Cardiac septum (tissue), 1 donor: ENCODE measurements at regions of chr19 and their contacts with region 1.

Region 1: GRCh38 chr19:14023404-14024235 is 4.3 kb upstream of the RLN3 start:
- DNase-seq: no peak

Region 2: DNA sequence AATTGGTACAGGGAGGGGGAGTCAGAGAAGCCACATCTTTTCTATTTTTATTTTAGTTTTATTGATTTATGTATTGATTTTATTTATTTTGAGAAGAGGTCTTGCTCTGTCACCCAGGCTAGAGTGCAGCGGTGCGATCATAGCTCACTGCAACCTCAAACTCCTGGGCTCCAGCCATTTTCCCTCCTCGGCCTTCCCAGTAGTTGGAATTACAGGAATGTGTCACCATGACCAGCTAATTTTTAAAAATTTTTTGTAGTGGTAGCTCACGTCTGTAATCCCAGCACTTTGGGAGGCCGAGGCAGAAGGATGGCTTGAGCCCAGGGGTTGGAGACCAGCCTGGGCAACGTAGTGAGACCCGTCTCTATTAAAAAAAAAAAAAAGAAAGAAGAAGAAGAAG is 12.1 kb after region 1 on chr19:
- intact Hi-C with region 1: loop called (anchors 1 kb)
- DNase-seq: no peak